Left ventricle myocardium inferior (tissue), 1 donor: ENCODE measurements at regions of chr5 and their contacts with region 1.

Region 1: GRCh38 chr5:42423285-42424165 is at the start of gene GHR:
- DNase-seq: peak; percentile 80
- H3K4me3 ChIP-seq: peak within 1 kb of the TSS; percentile 80
- H3K27ac ChIP-seq: peak within 1 kb of the TSS; percentile 92
- H3K4me1 ChIP-seq: peaks cover 32% of the 10 kb centered on the region
- H3K27me3 ChIP-seq: no peaks in the 10 kb centered on the region
- CTCF ChIP-seq: peak; percentile 84
- total RNA-seq, gene GHR: 12.9 TPM

Region 2: DNA sequence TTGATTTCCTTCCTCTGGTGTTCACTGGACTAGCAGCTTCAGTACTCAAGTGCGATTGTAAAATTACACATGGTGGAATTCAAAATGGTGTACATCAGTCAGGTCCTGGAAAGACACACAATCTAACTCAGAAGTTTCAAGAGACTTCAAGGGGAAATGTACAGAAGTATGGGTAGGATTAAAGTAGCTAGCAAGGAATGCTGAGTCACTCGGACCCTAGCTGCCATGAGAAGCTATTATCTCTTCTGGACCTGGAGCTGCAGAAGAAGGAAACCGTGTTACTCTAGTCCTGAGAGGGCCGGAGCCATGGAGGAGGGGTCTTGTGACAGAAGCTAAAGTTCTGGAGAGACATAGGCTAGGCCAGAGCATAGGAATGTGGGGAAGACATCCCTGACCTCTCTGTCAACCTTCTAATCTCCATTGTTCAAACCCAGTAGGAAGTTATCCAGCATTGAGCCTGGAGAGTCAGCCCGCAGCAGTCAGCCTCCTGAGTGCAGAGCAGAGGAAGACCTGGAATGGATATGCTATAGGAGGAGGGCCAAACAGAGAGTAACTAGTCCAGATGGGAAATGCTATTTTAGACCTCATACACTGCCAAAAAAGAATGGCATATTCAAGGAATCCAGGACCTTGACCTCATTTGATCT is 84.0 kb after region 1 on chr5:
- intact Hi-C with region 1: loop called (anchors 10 kb)
- DNase-seq: no peak
- H3K4me3 ChIP-seq: no peak overlapping the region
- H3K27ac ChIP-seq: peak overlapping the region; percentile 45
- H3K4me1 ChIP-seq: peaks cover 81% of the 10 kb centered on the region
- H3K27me3 ChIP-seq: no peaks in the 10 kb centered on the region
- CTCF ChIP-seq: no peak

Region 3: DNA sequence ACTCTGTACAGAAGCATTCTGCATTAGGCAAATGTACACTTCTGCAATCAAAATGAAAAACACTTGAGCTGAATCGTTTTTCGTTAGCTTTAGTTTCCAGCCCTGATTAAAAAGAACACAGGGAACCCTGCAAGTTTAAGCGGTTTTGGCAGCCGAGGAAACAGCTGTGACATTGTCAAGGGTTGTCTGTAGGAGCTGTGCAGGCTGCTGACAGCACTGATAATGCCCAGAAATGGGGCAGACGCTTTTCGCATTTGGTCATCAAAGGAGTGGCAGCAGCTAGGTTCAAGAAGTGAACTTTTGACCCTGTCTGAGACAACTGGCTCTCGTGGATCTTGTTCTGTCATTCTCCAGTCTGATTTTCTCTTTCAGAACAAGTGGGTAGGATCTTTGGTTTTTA is 167.5 kb after region 1 on chr5:
- intact Hi-C with region 1: loop called (anchors 5 kb)
- DNase-seq: peak; percentile 69
- H3K4me3 ChIP-seq: peak overlapping the region; percentile 31
- H3K27ac ChIP-seq: peak overlapping the region; percentile 82
- H3K4me1 ChIP-seq: peaks cover 75% of the 10 kb centered on the region
- H3K27me3 ChIP-seq: no peaks in the 10 kb centered on the region
- CTCF ChIP-seq: no peak

Region 4: DNA sequence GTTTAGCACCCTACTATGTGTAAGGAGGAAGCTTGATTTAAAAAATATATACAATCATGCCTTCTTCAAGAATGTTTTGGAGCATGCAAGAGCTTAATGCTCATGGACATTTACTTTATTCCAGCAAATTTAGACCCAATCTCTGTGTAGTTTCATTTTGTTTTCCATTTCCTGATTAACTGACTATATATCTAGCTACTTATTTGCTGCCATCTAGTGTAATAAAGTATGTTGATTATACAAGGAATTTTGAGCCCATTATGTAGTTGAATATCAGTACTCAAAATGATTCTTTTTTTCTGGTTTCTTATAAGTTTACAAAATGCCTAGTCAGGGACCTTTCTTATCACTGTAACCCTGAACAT is 233.1 kb after region 1 on chr5:
- intact Hi-C with region 1: loop called (anchors 5 kb)
- DNase-seq: no peak
- H3K4me3 ChIP-seq: peak overlapping the region; percentile 32
- H3K27ac ChIP-seq: no peak overlapping the region
- H3K4me1 ChIP-seq: peaks cover 36% of the 10 kb centered on the region
- H3K27me3 ChIP-seq: no peaks in the 10 kb centered on the region
- CTCF ChIP-seq: peak; percentile 54